ENCODE measurements at regions of chr5 and their contacts with region 1.

Region 1: DNA sequence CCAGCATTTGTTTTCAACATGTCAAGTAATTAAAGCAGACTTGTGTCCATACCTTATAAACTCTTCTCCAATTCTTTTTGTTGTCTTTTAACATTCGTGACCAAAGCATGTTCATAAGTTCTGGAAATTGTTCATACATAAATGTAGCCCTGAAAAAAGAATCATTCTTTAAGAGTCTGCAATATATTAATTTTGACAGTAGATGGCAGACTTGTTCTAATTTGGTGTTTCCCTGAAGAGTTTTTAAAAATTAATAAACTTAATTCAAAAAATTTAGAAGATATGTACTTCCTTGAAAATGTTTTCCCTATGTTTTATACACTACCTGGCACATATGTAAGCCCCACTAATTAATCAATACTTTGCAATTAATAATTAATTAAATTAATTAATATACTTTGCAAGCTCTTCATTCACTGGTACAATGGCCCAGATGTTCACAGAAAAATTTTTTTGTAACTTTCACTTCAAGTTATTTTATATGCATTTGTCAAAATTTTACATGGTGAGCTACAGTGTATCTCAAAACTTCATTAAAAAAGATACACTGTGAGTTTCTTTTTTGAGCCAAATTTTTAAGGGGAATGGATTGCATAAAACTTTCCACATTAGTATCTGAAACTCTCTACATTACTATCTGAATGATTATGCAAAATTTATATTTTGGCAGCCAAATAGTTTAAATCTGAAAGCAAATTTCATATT is 42.1 kb downstream of the CLINT1 start:
- DNase-seq: no peak

Region 2: DNA sequence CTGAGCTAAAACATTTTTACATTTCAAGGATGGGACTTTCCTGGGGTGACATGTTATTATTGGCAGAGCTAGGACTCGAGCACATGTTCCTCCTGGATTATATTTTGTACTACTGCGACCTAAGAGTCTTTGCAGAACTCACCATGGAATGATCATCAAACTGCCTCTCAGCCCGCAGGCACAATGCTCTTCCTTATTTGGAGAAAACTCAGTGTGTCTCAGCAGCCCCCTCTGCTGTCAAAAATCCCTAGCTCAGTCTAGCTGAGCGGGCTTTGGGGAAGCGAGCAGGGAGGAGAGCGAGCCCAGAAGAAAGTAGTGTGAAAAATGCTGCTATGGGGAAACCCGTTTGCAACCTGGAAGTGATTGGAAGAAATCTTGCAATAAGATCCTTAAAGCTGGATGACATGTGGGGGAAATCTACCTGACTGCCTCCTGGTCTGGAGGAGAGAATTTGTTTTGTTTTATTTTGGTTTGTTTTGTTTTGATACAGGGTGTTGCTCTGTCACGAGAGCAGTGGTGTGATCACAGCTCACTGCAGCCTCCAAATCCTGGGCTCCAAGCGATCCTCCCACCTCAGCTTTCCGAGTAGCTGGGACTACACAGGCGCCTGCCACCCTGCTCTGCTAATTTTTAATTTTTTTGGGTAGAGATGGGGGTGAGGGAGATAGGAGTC is 132.0 kb after region 1 on chr5:
- intact Hi-C with region 1: loop called (anchors 10 kb)
- DNase-seq: peak; percentile 60 to 93 (median 86)